ENCODE measurements at regions of chr12 and their contacts with region 1.

Region 1: DNA sequence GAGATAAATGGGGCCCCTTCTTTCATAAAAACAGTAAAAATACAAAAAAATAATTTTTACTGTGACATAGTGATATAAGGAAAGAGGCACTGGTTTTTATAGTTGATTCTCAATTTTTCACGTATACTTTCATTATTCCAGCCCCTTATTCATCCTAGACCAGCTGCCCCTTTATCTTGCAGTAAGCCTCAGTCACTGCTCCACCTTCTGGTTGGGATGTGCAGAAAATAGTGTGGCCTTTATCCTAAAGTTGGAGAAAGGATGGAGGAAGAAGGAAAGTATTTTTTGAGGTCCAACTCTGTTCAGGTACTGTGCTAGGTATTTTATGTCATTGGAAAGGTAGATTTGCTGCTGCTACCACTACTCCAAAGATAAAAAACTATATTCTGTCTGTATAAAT is 172.7 kb downstream of the ANO6 start:
- DNase-seq: peak in 1 of 5 donors; percentile 2
- H3K4me3 ChIP-seq: no peak overlapping the region
- H3K4me3 Mint-ChIP-seq: no peak overlapping the region
- H3K27ac ChIP-seq: no peak overlapping the region
- H3K27ac Mint-ChIP-seq: no peak overlapping the region
- H3K4me1 ChIP-seq: no peaks in the 10 kb centered on the region
- H3K4me1 Mint-ChIP-seq: no peaks in the 10 kb centered on the region
- H3K27me3 ChIP-seq: no peaks in the 10 kb centered on the region
- H3K27me3 Mint-ChIP-seq: no peaks in the 10 kb centered on the region

Region 2: GRCh38 chr12:45130881-45131281 is 257.7 kb before region 1 on chr12:
- CTCF ChIA-PET with region 1: no interaction called
- POLR2A ChIA-PET with region 1: no interaction called
- intact Hi-C with region 1: loop called (anchors 2 kb)
- DNase-seq: peak in 4 of 5 donors; percentile 8 to 25 (median 14)
- H3K4me3 ChIP-seq: no peak overlapping the region
- H3K4me3 Mint-ChIP-seq: no peak overlapping the region
- H3K27ac ChIP-seq: no peak overlapping the region
- H3K27ac Mint-ChIP-seq: no peak overlapping the region
- H3K4me1 ChIP-seq: no peaks in the 10 kb centered on the region
- H3K4me1 Mint-ChIP-seq: no peaks in the 10 kb centered on the region
- H3K27me3 ChIP-seq: no peaks in the 10 kb centered on the region
- H3K27me3 Mint-ChIP-seq: peaks cover 1 to 10% of the 10 kb centered on the region in 2 donors

Region 3: DNA sequence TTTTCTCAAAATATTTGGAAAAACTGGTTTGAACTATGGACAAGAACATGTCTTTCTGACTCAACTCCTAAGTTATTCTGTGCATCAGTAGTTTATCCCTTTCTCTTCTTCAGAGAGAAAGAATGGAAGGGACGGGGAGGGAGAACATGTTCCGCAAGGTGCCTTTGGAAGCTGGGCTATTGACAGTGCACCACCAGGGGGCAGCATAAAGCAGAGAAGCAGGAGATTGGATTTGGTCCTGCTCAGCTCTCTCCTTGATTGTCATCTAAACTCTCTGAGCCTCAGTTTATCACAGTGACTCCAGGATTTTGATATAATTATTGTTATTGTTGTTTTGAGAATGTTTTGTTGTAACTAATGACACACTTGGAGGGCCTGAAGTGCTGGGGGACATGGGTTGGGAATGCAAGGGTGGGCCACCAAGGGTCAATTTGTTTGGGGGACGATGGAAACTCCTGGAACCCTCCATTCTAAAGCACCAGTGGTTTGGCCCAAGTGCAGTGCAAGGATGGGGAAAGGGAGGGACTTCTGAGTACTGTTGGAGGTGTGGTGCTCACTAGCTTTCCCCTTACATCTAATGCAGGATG is 218.0 kb before region 1 on chr12:
- CTCF ChIA-PET with region 1: interaction called, 19 read pairs
- POLR2A ChIA-PET with region 1: no interaction called
- intact Hi-C with region 1: loop called (anchors 1 kb)
- DNase-seq: peak; percentile 58 to 66 (median 63)
- H3K4me3 ChIP-seq: no peak overlapping the region
- H3K4me3 Mint-ChIP-seq: no peak overlapping the region
- H3K27ac ChIP-seq: no peak overlapping the region
- H3K27ac Mint-ChIP-seq: peak overlapping the region in 1 of 7 donors; percentile 7
- H3K4me1 ChIP-seq: no peaks in the 10 kb centered on the region
- H3K4me1 Mint-ChIP-seq: no peaks in the 10 kb centered on the region
- H3K27me3 ChIP-seq: no peaks in the 10 kb centered on the region
- H3K27me3 Mint-ChIP-seq: peaks cover 0 to 1% of the 10 kb centered on the region in 2 donors

Region 4: DNA sequence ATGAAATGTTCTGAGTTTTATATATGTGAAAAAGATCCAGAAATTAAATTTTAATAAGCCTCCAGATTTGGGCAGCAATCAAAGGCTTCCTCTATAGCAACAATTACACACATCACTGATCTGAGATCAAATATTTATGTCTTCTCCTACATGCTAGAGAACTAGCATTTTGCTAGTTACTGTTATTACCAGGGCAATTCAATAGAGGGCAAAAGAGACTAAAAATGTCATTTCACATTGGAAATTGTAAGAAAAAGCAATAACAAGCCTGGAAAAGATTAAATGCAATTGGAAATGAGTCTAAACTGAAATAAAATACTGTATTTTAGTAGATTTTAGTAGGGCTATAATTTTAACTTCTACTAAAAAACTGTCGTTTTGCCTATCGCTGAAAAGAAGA is 205.3 kb before region 1 on chr12:
- CTCF ChIA-PET with region 1: interaction called, 10 read pairs
- POLR2A ChIA-PET with region 1: no interaction called
- intact Hi-C with region 1: loop called (anchors 1 kb)
- DNase-seq: no peak
- H3K4me3 ChIP-seq: no peak overlapping the region
- H3K4me3 Mint-ChIP-seq: no peak overlapping the region
- H3K27ac ChIP-seq: no peak overlapping the region
- H3K27ac Mint-ChIP-seq: no peak overlapping the region
- H3K4me1 ChIP-seq: no peaks in the 10 kb centered on the region
- H3K4me1 Mint-ChIP-seq: no peaks in the 10 kb centered on the region
- H3K27me3 ChIP-seq: no peaks in the 10 kb centered on the region
- H3K27me3 Mint-ChIP-seq: no peaks in the 10 kb centered on the region

Region 5: GRCh38 chr12:45435945-45436710 is 47.6 kb after region 1 on chr12:
- CTCF ChIA-PET with region 1: no interaction called
- POLR2A ChIA-PET with region 1: no interaction called
- intact Hi-C with region 1: no loop called
- DNase-seq: no peak
- H3K4me3 ChIP-seq: no peak overlapping the region
- H3K4me3 Mint-ChIP-seq: no peak overlapping the region
- H3K27ac ChIP-seq: no peak overlapping the region
- H3K27ac Mint-ChIP-seq: peak overlapping the region in 2 of 7 donors; percentile 23 to 48
- H3K4me1 ChIP-seq: no peaks in the 10 kb centered on the region
- H3K4me1 Mint-ChIP-seq: no peaks in the 10 kb centered on the region
- H3K27me3 ChIP-seq: no peaks in the 10 kb centered on the region
- H3K27me3 Mint-ChIP-seq: no peaks in the 10 kb centered on the region

Measured in CD4-positive, alpha-beta memory T cell (primary cell).